ENCODE measurements at regions of chr9 and their contacts with region 1.

Region 1: DNA sequence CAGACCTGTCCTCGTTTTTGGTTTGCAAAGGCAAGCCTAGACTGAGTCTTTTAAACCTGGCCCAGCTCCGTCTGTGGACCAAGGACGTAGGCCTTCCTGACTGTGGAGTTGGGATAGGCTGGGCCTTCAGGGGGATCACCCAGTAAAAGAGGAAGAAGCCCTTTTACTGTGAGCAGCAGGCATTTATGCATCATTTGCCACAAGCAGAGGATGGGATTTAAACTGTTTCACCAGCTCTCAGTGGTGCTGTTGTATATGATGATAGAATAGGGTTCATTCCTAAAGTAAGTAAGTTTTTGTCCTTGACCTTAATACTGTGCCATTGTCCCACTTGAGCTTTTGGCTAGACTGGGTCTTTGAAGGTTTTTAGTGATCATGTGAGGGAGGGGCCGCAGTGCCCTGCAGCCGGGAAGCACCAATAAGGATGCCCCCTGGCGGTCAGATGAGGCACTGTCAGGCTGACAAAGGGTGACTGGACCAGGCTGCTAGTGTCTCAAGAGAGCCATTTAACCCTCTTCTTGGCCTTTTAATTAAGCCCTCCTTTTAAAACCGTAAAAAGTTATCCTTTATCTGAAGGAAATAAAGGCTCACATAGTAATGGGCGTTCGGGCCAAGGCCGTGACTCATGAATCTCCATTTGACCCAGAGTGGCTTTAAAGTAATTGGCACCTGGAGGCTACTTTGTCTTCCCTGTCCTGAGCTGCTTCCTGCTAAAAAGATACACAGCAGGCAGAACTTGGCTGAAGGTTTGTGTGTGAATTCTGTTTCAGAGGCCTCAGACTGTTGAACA is 74.0 kb downstream of the UBAP1 start:
- DNase-seq: no peak
- H3K4me3 ChIP-seq: no peak overlapping the region
- H3K27ac ChIP-seq: peak overlapping the region; percentile 82
- H3K4me1 ChIP-seq: peaks cover 79% of the 10 kb centered on the region
- H3K27me3 ChIP-seq: no peaks in the 10 kb centered on the region
- CTCF ChIP-seq: peak; percentile 94 to 96

Region 2: GRCh38 chr9:34025062-34025461 is 227.8 kb before region 1 on chr9:
- CTCF ChIA-PET with region 1: no interaction called
- dilution Hi-C with region 1: no loop called
- in situ Hi-C with region 1: no loop called
- intact Hi-C with region 1: loop called (anchors 5 kb)
- DNase-seq: no peak
- H3K4me3 ChIP-seq: no peak overlapping the region
- H3K27ac ChIP-seq: no peak overlapping the region
- H3K4me1 ChIP-seq: no peaks in the 10 kb centered on the region
- H3K27me3 ChIP-seq: no peaks in the 10 kb centered on the region
- CTCF ChIP-seq: no peak

Region 3: DNA sequence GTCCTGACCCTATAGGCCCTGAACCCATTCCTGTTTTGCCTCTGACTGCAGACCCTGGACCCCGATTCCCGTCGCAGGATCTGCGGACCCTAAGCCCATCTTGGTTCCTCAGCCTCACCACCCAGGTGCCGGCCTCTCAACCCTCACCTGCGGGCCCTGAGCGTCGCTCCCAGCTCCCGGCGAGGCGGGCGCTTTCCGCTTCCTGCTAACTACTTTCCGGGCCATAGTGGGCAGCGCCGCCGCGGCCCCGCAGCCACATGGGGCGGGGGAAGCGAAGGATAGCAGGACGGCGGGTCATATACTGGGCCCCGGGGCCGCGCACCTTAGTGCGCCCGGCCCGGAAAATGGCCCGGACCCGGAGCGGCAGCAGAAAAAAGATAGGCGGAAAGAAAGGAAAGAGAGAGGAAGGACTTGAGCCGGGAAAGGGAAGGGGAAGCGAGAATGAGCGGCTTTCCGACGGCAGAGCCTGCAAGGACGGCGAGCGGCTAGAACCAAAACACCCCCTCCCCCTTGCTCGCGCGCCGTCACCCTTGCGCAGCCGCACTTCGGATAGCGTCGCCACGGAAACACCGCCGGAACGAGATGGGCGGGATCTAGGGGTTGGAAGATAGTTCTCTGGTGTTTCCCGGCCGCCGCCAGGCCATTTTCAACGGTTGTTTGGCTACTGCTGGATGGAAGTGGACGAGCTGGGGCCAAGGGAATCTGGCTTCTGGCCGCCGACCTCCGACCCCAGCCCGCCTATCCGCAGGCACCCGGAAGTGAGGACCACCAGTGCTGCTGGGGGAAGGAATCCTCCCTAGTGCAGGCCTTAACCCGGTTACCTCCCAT is 126.4 kb before region 1 on chr9 and contains the start of gene DCAF12:
- CTCF ChIA-PET with region 1: interaction called, 5 read pairs
- dilution Hi-C with region 1: no loop called
- in situ Hi-C with region 1: no loop called
- intact Hi-C with region 1: loop called (anchors 1 kb)
- DNase-seq: peak; percentile 91
- H3K4me3 ChIP-seq: peak within 1 kb of the TSS; percentile 67 to 88 (median 76)
- H3K27ac ChIP-seq: peak within 1 kb of the TSS; percentile 88
- H3K4me1 ChIP-seq: peaks cover 20% of the 10 kb centered on the region
- H3K27me3 ChIP-seq: no peaks in the 10 kb centered on the region
- CTCF ChIP-seq: peak in 1 of 2 donors; percentile 8
- total RNA-seq, gene DCAF12: 30.6 to 31.7 TPM

Region 4: DNA sequence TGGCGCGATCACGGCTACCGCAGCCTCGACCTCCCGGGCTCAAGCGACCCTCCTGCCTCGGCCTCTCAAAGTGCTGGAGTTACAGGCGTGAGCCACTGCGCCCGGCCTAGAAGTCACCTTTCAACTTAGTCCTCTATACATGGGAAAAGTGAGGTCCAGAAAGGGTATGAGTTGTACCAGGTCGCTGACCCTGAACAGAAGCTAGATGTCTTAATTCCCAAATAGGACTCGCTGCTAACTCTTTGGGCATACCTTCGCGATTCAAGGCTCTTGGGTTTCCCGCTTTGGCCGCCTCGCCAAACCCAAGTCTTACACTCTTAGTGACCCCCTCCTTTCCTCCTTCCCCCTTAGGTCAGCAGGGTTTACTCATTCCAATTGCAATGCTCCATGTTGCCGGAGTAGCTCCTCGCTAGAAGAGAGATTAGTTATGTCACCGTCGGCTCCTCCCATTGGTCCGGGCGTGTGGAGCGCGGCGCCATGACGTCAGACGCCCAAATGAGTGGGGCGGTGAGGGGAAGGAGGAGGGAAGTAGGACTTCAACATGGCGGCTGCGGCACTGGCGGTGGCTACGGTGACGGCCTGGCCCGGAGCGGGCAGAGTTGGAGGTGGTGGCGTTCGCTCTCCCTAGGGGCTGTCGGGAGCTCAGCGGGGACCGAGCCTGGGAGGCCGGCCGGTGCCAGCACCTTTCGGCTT is 74.2 kb before region 1 on chr9 and contains the start of gene UBAP1:
- CTCF ChIA-PET with region 1: no interaction called
- dilution Hi-C with region 1: no loop called
- in situ Hi-C with region 1: no loop called
- intact Hi-C with region 1: loop called (anchors 2 kb)
- DNase-seq: peak; percentile 98
- H3K4me3 ChIP-seq: peak within 1 kb of the TSS; percentile 69 to 80 (median 79)
- H3K27ac ChIP-seq: peak within 1 kb of the TSS; percentile 83
- H3K4me1 ChIP-seq: peaks cover 17% of the 10 kb centered on the region
- H3K27me3 ChIP-seq: no peaks in the 10 kb centered on the region
- CTCF ChIP-seq: no peak
- total RNA-seq, gene UBAP1: 68.4 to 71.8 TPM

Region 5: GRCh38 chr9:34328987-34329832 is 76.3 kb after region 1 on chr9 and contains the starts of genes KIF24 and NUDT2:
- CTCF ChIA-PET with region 1: interaction called, 4 read pairs
- dilution Hi-C with region 1: no loop called
- in situ Hi-C with region 1: no loop called
- intact Hi-C with region 1: loop called (anchors 1 kb)
- DNase-seq: peak; percentile 100
- H3K4me3 ChIP-seq: peak within 1 kb of the TSS; percentile 85 to 89 (median 86)
- H3K27ac ChIP-seq: peak within 1 kb of the TSS; percentile 96
- H3K4me1 ChIP-seq: peaks cover 45% of the 10 kb centered on the region
- H3K27me3 ChIP-seq: no peaks in the 10 kb centered on the region
- CTCF ChIP-seq: no peak
- total RNA-seq, gene KIF24: 1.3 to 3.9 TPM
- total RNA-seq, gene NUDT2: 17.8 to 22.9 TPM

Region 6: GRCh38 chr9:34500623-34501267 is 247.9 kb after region 1 on chr9:
- CTCF ChIA-PET with region 1: no interaction called
- dilution Hi-C with region 1: no loop called
- in situ Hi-C with region 1: no loop called
- intact Hi-C with region 1: no loop called
- DNase-seq: peak; percentile 64
- H3K4me3 ChIP-seq: no peak overlapping the region
- H3K27ac ChIP-seq: no peak overlapping the region
- H3K4me1 ChIP-seq: peaks cover 29% of the 10 kb centered on the region
- H3K27me3 ChIP-seq: no peaks in the 10 kb centered on the region
- CTCF ChIP-seq: peak; percentile 98

Region 7: GRCh38 chr9:34546834-34547827 is 294.3 kb after region 1 on chr9:
- CTCF ChIA-PET with region 1: no interaction called
- dilution Hi-C with region 1: no loop called
- in situ Hi-C with region 1: no loop called
- intact Hi-C with region 1: loop called (anchors 10 kb)
- DNase-seq: peak; percentile 59
- H3K4me3 ChIP-seq: no peak overlapping the region
- H3K27ac ChIP-seq: no peak overlapping the region
- H3K4me1 ChIP-seq: no peaks in the 10 kb centered on the region
- H3K27me3 ChIP-seq: no peaks in the 10 kb centered on the region
- CTCF ChIP-seq: peak; percentile 58 to 77

Region 8: GRCh38 chr9:34783951-34784487 is 531.2 kb after region 1 on chr9:
- CTCF ChIA-PET with region 1: no interaction called
- dilution Hi-C with region 1: no loop called
- in situ Hi-C with region 1: no loop called
- intact Hi-C with region 1: no loop called
- DNase-seq: no peak
- H3K4me3 ChIP-seq: no peak overlapping the region
- H3K27ac ChIP-seq: no peak overlapping the region
- H3K4me1 ChIP-seq: no peaks in the 10 kb centered on the region
- H3K27me3 ChIP-seq: peaks cover 5% of the 10 kb centered on the region
- CTCF ChIP-seq: no peak